ENCODE measurements at regions of chr11 and their contacts with region 1.

Region 1: DNA sequence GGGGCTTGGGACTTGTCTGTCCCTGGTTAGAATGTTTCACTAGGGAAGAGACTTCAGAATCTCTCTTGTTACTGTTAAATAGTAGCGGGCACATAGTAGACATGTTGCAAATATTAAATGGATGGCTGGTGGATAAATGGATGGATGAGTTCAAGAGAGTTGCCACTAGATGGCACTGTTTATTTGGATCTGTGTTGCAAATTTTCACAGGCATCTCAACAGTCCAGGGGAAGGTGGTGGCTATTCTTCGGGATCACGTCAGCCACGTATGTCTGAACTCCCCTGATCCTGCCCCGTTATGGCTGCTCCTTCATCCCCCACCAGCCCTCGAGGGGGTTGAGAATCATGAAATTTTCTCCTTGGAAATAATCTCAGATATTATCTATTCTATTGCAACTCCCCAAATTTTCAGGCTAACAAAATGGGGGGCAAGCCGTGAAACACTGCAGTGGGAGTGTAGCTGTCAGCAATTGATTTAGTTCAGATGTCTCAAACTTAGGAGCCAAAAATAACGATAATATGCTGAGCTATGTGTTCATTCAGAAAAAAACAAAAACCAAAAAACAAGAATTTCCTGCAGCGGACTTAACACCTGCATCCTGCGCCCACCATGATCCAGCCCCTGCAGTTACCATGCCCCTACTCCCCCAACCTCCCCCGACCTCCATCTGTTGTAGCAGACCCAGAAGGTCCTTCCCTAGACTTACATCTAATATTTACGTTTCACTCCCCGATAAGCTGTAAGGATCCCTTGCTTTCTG is 29.1 kb upstream of the BIRC3 start:
- H3K4me3 ChIP-seq: no peak overlapping the region
- H3K27ac ChIP-seq: no peak overlapping the region
- H3K4me1 ChIP-seq: no peaks in the 10 kb centered on the region
- CTCF ChIP-seq: peak; percentile 42; the same call in 1 of the 2 replicates

Region 2: DNA sequence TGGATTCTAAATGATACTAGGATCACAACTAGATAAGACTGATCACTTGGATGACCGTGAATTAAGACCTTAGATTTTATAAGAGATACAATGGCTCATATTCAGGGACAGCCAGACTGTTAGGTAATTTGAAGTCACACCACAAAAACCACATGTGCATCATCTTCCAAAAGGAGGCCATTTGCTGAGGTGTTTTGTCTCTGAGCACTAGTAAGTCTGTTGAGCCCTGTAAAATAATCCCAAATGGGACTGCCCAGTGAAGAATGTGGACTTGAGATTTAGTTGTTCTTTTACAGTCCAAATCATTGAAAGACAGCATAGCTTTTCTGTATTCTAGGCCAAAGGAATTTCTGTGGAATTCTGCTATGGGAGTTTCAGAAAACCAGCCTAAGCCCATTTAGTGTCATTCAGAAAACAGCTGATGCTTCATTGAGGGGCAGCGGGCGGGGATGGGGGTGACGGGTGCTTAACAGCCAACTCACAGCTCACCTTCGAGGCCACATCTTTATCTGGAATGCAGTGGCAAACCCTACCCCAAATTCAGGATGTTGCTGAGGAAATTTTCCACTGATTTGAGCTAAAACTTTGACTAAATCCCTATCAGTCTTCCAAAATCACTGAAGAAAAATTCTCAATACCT is 50.9 kb before region 1 on chr11:
- CTCF ChIA-PET with region 1: no interaction called
- POLR2A ChIA-PET with region 1: no interaction called
- H3K4me3 ChIP-seq: no peak overlapping the region
- H3K27ac ChIP-seq: no peak overlapping the region
- H3K4me1 ChIP-seq: no peaks in the 10 kb centered on the region
- CTCF ChIP-seq: no peak

Region 3: DNA sequence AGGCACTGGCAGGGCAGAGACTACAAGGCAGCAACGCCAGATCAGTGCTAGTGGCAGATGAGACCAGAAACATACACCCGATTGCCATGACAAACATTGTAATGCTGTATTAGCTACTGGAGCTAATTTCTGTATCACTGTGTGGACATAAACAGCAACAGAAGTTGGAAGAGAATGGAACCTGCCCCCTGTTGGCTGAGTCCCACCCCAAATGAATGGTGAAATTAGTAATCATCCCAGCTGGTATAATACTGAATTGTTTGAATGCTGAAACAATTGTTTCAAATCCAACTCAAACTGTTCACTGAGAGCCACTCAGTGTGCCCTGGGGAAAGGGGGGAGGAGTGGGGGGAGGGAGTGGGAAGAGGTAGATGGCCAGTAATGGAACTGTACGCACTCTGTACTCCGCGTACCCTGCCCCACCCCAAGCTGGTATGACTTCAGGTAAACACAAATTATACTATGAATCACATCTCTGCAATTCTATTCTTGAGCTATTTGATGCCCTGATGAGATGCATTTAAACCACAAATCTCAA is 18.0 kb after region 1 on chr11:
- CTCF ChIA-PET with region 1: interaction called, 20 read pairs
- POLR2A ChIA-PET with region 1: no interaction called
- H3K4me3 ChIP-seq: no peak overlapping the region
- H3K27ac ChIP-seq: no peak overlapping the region
- H3K4me1 ChIP-seq: 0 out of 2 replicates have a peak, but pooled peaks cover 3% of the 10 kb centered on the region
- CTCF ChIP-seq: no peak

Region 4: DNA sequence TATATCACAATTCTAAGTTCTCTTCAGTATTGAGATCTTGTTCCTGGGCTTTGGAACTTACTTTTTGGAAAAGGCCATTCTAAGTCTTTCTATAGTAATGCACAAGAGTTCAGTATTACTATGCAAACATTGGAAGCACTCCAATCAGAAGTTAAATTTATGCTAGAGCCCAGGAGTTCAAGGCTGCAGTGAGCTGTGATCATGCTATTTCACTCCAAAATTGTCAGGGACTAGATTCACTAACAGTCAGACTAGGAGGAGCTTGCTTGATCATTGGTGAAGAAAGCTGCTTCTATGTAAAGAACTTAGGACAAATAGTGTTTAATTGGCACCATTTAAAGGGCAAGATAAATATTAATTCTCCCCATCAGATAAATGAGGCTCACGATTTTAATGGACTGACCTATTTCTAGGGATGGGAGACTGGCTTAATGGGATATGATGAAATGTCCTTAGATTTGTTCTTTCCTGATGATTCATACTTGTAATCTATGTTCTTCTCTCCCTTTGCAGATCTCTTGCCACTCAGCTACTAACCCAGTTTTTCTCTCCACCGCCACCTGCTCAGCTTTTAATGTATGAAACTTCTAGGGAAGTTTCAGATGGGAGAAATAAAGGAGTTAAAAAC is 197.1 kb after region 1 on chr11:
- CTCF ChIA-PET with region 1: no interaction called
- POLR2A ChIA-PET with region 1: no interaction called
- H3K4me3 ChIP-seq: no peak overlapping the region
- H3K27ac ChIP-seq: no peak overlapping the region
- H3K4me1 ChIP-seq: no peaks in the 10 kb centered on the region
- CTCF ChIP-seq: no peak